Activated T-helper 1 cell treated with anti-CD3 and anti-CD28 coated beads, Interleukin-12 subunit alpha, Interleukin-12 subunit beta, Interleukin-2, Interleukin-4 antibody, amounts not matched to agents 30 ng/mL and 10 ng/mL and 1 ng/mL, durations not matched to agents 14 hours and 24 hours and 36 hours (primary cell): ENCODE measurements at regions of chr19 and their contacts with region 1.

Region 1: DNA sequence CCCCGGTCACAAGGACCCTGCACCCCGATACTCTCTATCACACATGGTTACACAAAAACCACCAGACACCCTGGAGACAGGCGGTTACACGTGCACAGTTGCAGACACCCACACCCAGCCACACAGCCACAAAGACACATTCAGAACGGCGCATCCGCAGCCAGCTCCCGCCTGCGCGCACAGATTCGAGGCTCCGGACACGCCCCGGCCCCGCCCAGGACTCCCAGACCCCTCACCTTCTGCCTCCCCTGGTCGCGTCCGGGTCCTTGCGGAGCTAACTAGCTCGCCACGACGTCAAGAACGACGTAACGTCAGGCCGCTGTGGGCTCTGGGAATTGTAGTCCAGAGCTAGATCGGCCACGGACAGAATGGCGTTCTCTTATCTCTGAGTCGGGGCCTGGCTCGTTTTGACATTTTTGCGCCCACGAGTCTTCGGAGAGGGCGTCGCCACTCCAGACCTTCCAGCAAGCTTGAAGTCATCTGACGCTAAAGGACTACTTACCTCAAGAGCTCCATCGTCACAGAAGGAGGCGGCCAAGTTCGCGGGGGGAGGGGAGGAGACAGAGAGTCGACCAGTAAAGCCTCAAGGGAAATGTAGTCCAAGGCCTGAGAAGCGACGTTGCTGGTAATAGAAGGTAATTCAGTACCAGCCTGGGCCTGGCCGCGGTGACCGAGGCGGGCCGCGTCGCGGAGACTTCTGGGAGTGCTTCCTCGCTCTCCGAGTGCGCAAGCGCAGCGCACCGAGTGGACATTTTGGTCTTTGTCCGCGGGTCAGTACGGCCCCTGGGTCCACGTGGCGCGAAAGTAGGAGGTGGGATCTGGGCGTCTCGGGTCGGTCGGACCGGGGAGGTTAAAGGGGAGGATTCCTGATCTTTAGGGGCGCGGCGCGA is at the starts of genes ZNF146 and ZNF565:
- DNase-seq: peak; percentile 94
- H3K4me3 Mint-ChIP-seq: no peak within 1 kb of the TSS
- H3K27ac Mint-ChIP-seq: no peak within 1 kb of the TSS
- H3K4me1 Mint-ChIP-seq: no peaks in the 10 kb centered on the region
- H3K27me3 Mint-ChIP-seq: no peaks in the 10 kb centered on the region
- total RNA-seq, gene ZNF146: 82.5 and 94.0 TPM in 2 replicates
- total RNA-seq, gene ZNF565: 2.1 and 2.4 TPM in 2 replicates

Region 2: GRCh38 chr19:36014029-36014924 is 200.4 kb before region 1 on chr19 and contains the start of gene ALKBH6:
- intact Hi-C with region 1: loop called (anchors 1 kb)
- DNase-seq: peak; percentile 100
- H3K4me3 Mint-ChIP-seq: peak within 1 kb of the TSS; percentile 98
- H3K27ac Mint-ChIP-seq: peak within 1 kb of the TSS; percentile 96
- H3K4me1 Mint-ChIP-seq: peaks cover 46% of the 10 kb centered on the region
- H3K27me3 Mint-ChIP-seq: no peaks in the 10 kb centered on the region
- total RNA-seq, gene ALKBH6: 48.3 and 60.6 TPM in 2 replicates

Region 3: DNA sequence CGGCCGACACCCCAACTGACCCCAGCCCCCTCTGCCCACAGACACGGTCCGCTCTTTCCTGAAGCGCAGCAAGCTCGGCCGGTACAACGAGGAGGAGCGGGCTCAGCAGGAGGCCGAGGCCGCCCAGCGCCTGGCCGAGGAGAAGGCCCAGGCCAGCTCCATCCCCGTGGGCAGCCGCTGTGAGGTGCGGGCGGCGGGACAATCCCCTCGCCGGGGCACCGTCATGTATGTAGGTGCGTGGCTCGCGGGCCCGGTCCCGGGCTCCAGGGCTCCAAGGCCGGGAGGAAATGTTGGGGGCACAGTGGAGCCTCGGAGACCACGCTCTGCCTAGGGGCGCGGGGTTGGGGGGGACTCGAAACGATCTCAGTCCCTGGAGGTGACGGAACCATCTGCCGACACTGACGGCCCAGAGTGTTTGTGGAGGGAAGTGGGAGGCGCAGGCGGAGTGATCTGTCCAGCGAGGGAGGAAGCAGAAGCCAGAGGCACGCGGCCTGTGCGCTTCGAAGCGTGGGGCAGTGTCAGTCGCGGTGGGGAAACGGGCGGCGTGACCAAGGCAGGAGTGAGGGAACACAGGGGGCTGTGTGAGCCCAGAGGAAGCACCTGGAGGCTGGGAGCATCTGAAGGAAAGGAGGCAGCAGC is 93.0 kb before region 1 on chr19:
- intact Hi-C with region 1: no loop called
- DNase-seq: no peak
- H3K4me3 Mint-ChIP-seq: no peak overlapping the region
- H3K27ac Mint-ChIP-seq: no peak overlapping the region
- H3K4me1 Mint-ChIP-seq: peaks cover 20% of the 10 kb centered on the region
- H3K27me3 Mint-ChIP-seq: no peaks in the 10 kb centered on the region

Region 4: DNA sequence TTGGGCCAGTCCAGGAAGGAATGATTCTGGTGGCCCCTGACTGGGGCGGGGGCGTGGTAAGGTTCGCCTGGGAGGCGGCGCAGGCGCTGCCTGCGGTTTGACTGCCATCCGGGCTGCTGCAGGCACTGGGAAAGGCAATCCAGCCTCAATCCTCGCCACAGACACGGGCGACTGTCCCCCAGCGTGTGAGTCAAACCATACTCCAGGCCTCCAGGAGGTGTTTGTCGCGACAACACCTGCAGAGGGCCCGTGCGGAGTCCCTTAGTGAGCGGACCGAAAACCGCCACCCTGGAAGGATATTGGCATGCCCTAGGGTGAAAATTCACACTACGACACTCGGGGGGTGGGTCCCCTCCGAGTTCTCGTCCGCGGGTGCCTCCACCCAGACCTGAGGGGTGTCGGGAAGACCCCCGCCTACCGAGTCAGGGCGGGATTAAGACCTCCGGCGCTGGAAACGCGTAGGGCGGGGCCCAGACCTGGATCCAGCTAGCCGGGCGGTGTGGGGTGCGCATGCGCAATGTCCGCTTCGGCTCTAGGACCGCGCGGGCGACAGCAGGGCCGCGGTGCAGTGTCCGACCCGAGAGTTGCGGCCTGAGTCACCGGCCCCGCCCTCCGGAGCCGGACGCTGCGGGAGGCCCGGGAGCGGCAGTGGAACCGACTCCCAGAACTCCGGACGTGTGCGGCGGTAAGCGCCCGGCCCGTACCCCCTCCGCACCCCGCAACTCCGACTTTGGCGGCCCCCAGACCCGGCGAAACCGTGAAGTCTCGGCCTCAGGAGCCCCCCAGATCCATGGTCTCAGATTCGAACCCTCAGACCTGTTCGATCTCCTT is 74.9 kb before region 1 on chr19 and contains the start of gene CAPNS1:
- intact Hi-C with region 1: loop called (anchors 1 kb)
- DNase-seq: peak; percentile 92
- H3K4me3 Mint-ChIP-seq: peak within 1 kb of the TSS; percentile 97
- H3K27ac Mint-ChIP-seq: peak within 1 kb of the TSS; percentile 99
- H3K4me1 Mint-ChIP-seq: peaks cover 20% of the 10 kb centered on the region
- H3K27me3 Mint-ChIP-seq: peaks cover 1% of the 10 kb centered on the region
- total RNA-seq, gene CAPNS1: 326 and 335 TPM in 2 replicates

Region 5: GRCh38 chr19:36196249-36196648 is 18.4 kb before region 1 on chr19:
- intact Hi-C with region 1: no loop called
- DNase-seq: no peak
- H3K4me3 Mint-ChIP-seq: no peak overlapping the region
- H3K27ac Mint-ChIP-seq: no peak overlapping the region
- H3K4me1 Mint-ChIP-seq: no peaks in the 10 kb centered on the region
- H3K27me3 Mint-ChIP-seq: no peaks in the 10 kb centered on the region

Region 6: GRCh38 chr19:36528194-36528920 is 313.7 kb after region 1 on chr19 and contains the start of gene ZNF260:
- intact Hi-C with region 1: loop called (anchors 1 kb)
- DNase-seq: peak; percentile 89
- H3K4me3 Mint-ChIP-seq: peak within 1 kb of the TSS; percentile 95
- H3K27ac Mint-ChIP-seq: peak within 1 kb of the TSS; percentile 93
- H3K4me1 Mint-ChIP-seq: peaks cover 22% of the 10 kb centered on the region
- H3K27me3 Mint-ChIP-seq: peaks cover 1% of the 10 kb centered on the region
- total RNA-seq, gene ZNF260: 7.5 and 8.9 TPM in 2 replicates

Region 7: DNA sequence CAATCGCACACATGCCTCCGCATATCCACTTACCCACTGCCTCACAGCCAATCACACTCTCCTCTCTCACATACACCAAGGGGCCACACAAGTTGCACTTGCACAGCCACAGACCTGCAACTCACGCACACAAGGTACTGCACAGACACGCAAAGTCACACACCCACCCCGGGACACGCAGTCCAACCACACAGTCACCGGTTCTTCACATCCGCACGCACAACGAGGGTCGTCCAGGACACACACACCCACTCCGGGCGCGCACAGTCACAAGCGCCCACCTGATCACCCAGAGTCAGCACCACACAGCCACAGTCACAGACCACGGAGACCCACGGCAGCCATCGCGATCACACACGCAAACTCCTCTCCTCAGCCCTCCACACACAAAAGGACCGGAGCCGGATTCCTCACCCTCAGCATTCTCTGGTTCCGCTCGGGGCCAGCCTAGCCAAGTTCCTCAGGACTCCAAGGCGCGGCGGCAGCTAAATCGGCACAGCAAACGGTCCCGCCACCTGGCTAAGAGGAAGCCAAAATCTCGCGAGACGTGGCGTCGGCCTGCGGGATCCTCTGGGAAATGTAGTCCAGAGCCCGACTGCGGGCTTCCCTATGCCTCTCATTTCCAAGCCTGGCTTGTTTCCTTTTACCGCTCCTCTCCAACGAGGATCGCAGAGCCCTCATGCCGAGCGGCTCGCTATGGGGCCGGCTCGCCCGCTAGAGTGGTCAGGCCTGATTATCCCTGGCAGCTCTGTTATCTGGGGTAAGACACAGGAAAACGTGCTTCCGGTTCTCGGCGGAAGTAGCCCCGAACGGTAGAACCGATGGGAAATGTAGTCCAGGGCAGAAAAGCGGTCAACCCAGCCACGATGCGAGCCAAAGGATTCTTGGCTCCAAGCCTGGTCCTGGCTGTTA is 557.9 kb after region 1 on chr19 and contains the start of gene ZNF850:
- intact Hi-C with region 1: loop called (anchors 10 kb)
- DNase-seq: peak; percentile 88
- H3K4me3 Mint-ChIP-seq: peak within 1 kb of the TSS; percentile 98
- H3K27ac Mint-ChIP-seq: peak within 1 kb of the TSS; percentile 93
- H3K4me1 Mint-ChIP-seq: peaks cover 18% of the 10 kb centered on the region
- H3K27me3 Mint-ChIP-seq: no peaks in the 10 kb centered on the region
- total RNA-seq, gene ZNF850: 3.2 and 3.7 TPM in 2 replicates

Region 8: GRCh38 chr19:37077934-37078725 is 863.5 kb after region 1 on chr19 and contains the start of gene ZNF420:
- intact Hi-C with region 1: loop called (anchors 10 kb)
- DNase-seq: peak; percentile 85
- H3K4me3 Mint-ChIP-seq: peak within 1 kb of the TSS; percentile 93
- H3K27ac Mint-ChIP-seq: peak within 1 kb of the TSS; percentile 90
- H3K4me1 Mint-ChIP-seq: peaks cover 21% of the 10 kb centered on the region
- H3K27me3 Mint-ChIP-seq: no peaks in the 10 kb centered on the region
- total RNA-seq, gene ZNF420: 5.9 and 9.1 TPM in 2 replicates

Region 9: GRCh38 chr19:37466798-37467607 is 1252.4 kb after region 1 on chr19 and contains the start of gene ZNF569:
- intact Hi-C with region 1: loop called (anchors 1 kb)
- DNase-seq: peak; percentile 85
- H3K4me3 Mint-ChIP-seq: peak within 1 kb of the TSS; percentile 92
- H3K27ac Mint-ChIP-seq: peak within 1 kb of the TSS; percentile 93
- H3K4me1 Mint-ChIP-seq: peaks cover 27% of the 10 kb centered on the region
- H3K27me3 Mint-ChIP-seq: no peaks in the 10 kb centered on the region
- total RNA-seq, gene ZNF569: 2.7 and 3.7 TPM in 2 replicates